H1 (cell line): ENCODE measurements at regions of chr7 and their contacts with region 1.

Region 1: GRCh38 chr7:149799397-149800171 is 26.2 kb upstream of the ZNF467 start:
- DNase-seq: peak in 1 of 2 experiments; percentile 91
- H3K4me3 ChIP-seq: no peak overlapping the region
- H3K27ac ChIP-seq: no peak overlapping the region
- H3K4me1 ChIP-seq: peaks cover 0 to 7% (median 5%) of the 10 kb centered on the region in 4 experiments; a peak in 6 of 7 replicates
- H3K27me3 ChIP-seq: no peaks in the 10 kb centered on the region
- CTCF ChIP-seq: peak in 2 of 3 experiments; percentile 73 to 89; a peak in 3 of 4 replicates
- EP300 ChIP-seq: no peak
- POLR2A ChIP-seq: no peak
- RAD21 ChIP-seq: peak; percentile 67 to 80

Region 2: GRCh38 chr7:149500910-149501309 is 298.7 kb before region 1 on chr7:
- CTCF ChIA-PET with region 1: no interaction called
- POLR2A ChIA-PET with region 1: no interaction called
- DNase-seq: no peak
- H3K4me3 ChIP-seq: no peak overlapping the region
- H3K27ac ChIP-seq: no peak overlapping the region
- H3K4me1 ChIP-seq: no peaks in the 10 kb centered on the region; a peak in 1 of 7 replicates
- H3K27me3 ChIP-seq: peaks cover 0 to 3% (median under 1%) of the 10 kb centered on the region in 4 experiments; a peak in 2 of 7 replicates
- CTCF ChIP-seq: no peak
- EP300 ChIP-seq: no peak
- POLR2A ChIP-seq: no peak
- RAD21 ChIP-seq: no peak

Region 3: GRCh38 chr7:149764481-149765398 is 34.8 kb before region 1 on chr7:
- CTCF ChIA-PET with region 1: interaction called, 28 read pairs
- POLR2A ChIA-PET with region 1: interaction called, 3 read pairs
- DNase-seq: peak in 1 of 2 experiments; percentile 73
- H3K4me3 ChIP-seq: peak overlapping the region; percentile 18 to 56 (median 38)
- H3K27ac ChIP-seq: no peak overlapping the region
- H3K4me1 ChIP-seq: peaks cover 0 to 14% (median 12%) of the 10 kb centered on the region in 4 experiments; a peak in 6 of 7 replicates
- H3K27me3 ChIP-seq: peaks cover 68 to 95% (median 87%) of the 10 kb centered on the region in 4 experiments
- CTCF ChIP-seq: peak in 2 of 3 experiments; percentile 33 to 51; a peak in 3 of 4 replicates
- EP300 ChIP-seq: no peak
- POLR2A ChIP-seq: no peak
- RAD21 ChIP-seq: peak; percentile 23 to 24; a peak in 2 of 4 replicates

Region 4: GRCh38 chr7:149771721-149772240 is 27.8 kb before region 1 on chr7:
- CTCF ChIA-PET with region 1: interaction called, 28 read pairs
- POLR2A ChIA-PET with region 1: no interaction called
- DNase-seq: peak; percentile 71 to 92
- H3K4me3 ChIP-seq: peak overlapping the region; percentile 40 to 86 (median 44); a peak in 6 of 8 replicates
- H3K27ac ChIP-seq: no peak overlapping the region; the same call in 1 of the 2 replicates
- H3K4me1 ChIP-seq: peaks cover 0 to 9% (median 7%) of the 10 kb centered on the region in 4 experiments; a peak in 6 of 7 replicates
- H3K27me3 ChIP-seq: peaks cover 42 to 72% (median 68%) of the 10 kb centered on the region in 4 experiments
- CTCF ChIP-seq: no peak
- EP300 ChIP-seq: peak in 1 of 2 experiments; percentile 51; a peak in 1 of 3 replicates
- POLR2A ChIP-seq: no peak
- RAD21 ChIP-seq: no peak

Region 5: DNA sequence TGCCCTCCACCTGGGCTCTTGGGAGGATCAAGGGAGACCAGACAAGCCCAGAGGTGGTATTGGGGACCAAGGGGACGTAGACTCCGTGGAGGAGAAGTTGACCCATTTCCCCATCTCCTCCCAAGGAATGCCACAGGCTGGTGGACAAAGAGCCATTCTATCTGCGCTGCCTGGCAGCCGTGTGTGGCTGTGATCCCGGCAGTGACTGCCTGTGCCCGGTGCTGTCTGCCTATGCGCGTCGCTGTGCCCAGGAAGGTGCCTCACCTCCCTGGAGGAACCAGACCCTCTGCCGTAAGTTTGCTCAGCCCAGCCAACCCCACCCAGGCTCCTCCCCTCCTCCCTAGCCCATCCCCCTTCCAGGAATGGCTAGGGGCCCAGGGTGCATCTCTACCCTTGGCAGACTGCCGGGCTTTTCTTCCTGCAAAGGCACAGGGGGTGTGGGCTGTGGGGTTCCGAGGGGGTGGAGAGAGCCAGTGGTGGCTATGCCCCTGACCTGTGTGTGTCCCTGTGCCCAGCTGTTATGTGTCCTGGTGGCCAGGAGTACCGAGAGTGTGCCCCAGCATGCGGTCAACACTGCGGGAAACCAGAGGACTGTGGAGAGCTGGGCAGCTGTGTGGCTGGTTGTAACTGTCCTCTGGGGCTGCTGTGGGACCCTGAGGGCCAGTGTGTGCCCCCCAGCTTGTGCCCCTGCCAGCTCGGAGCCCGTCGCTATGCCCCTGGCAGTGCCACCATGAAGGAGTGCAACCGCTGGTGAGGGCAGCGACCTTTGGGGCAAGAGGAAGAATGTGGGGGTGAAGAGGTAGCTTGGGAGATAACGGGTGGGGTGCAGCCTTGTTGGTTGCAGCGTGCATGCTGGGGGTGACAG is 16.0 kb before region 1 on chr7:
- CTCF ChIA-PET with region 1: interaction called, 120 read pairs
- POLR2A ChIA-PET with region 1: interaction called, 4 read pairs
- DNase-seq: no peak
- H3K4me3 ChIP-seq: no peak overlapping the region
- H3K27ac ChIP-seq: no peak overlapping the region
- H3K4me1 ChIP-seq: peaks cover 0 to 15% (median 6%) of the 10 kb centered on the region in 4 experiments; a peak in 6 of 7 replicates
- H3K27me3 ChIP-seq: peaks cover 0 to 15% (median 11%) of the 10 kb centered on the region in 4 experiments; a peak in 5 of 7 replicates
- CTCF ChIP-seq: no peak
- EP300 ChIP-seq: no peak
- POLR2A ChIP-seq: no peak
- RAD21 ChIP-seq: no peak

Region 6: DNA sequence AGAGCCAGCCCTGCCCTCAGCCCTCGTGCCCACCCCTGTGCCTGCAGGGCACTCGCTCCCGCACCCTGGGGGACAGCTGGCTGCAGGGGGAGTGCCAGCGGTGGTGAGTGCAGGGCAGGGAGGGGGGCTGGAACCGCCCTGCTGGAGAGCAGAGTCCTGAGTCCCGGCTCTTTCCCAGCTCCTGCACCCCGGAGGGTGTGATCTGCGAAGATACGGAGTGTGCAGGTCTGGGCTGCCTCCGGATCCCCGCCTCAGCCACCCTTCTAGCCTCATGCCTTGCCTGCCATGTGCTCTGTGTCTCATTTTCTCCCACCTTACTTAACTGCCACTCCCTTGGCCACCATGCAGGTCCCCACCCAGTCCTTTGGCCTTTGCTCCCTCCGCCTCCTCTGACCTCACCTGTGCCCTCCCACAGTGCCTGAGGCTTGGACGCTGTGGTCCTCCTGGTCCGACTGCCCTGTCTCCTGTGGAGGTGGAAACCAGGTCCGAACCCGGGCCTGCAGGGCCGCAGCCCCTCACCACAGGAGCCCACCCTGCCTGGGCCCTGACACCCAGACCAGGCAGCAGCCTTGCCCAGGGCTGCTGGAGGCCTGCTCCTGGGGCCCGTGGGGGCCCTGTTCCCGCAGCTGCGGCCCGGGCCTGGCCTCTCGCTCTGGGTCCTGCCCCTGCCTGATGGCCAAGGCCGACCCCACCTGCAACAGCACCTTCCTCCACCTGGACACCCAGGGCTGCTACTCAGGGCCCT is 22.0 kb after region 1 on chr7:
- CTCF ChIA-PET with region 1: interaction called, 67 read pairs
- POLR2A ChIA-PET with region 1: interaction called, 5 read pairs
- DNase-seq: no peak
- H3K4me3 ChIP-seq: no peak overlapping the region
- H3K27ac ChIP-seq: no peak overlapping the region
- H3K4me1 ChIP-seq: peaks cover 0 to 1% (median 0%) of the 10 kb centered on the region in 4 experiments; a peak in 2 of 7 replicates
- H3K27me3 ChIP-seq: no peaks in the 10 kb centered on the region
- CTCF ChIP-seq: no peak
- EP300 ChIP-seq: no peak
- POLR2A ChIP-seq: no peak
- RAD21 ChIP-seq: no peak

Region 7: GRCh38 chr7:149854611-149855360 is 55.2 kb after region 1 on chr7:
- CTCF ChIA-PET with region 1: interaction called, 209 read pairs
- POLR2A ChIA-PET with region 1: no interaction called
- DNase-seq: peak in 1 of 2 experiments; percentile 62
- H3K4me3 ChIP-seq: peak overlapping the region in 2 of 4 experiments; percentile 1 to 27; a peak in 1 of 8 replicates
- H3K27ac ChIP-seq: no peak overlapping the region
- H3K4me1 ChIP-seq: peaks cover 6 to 17% (median 11%) of the 10 kb centered on the region in 4 experiments
- H3K27me3 ChIP-seq: no peaks in the 10 kb centered on the region
- CTCF ChIP-seq: no peak
- EP300 ChIP-seq: no peak
- POLR2A ChIP-seq: no peak
- RAD21 ChIP-seq: no peak

Region 8: DNA sequence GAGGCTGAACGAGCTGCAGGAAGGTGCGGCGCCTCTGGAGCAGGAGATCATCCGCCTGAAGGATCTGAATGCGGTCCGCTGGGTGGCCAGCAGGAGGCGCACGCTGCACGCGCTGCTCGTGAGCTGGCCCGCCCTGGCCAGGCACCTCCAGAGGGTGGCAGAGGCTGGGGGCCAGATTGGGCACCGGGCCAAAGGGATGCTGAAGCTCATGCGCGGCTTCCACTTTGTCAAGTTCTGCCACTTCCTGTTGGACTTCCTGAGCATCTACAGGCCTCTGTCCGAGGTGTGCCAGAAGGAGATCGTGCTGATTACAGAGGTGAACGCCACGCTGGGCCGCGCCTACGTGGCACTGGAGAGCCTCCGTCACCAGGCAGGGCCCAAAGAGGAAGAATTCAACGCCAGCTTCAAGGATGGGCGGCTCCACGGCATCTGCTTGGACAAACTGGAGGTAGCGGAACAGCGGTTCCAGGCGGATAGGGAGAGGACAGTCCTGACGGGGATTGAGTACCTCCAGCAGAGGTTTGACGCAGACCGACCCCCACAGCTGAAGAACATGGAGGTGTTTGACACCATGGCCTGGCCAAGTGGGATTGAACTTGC is 62.0 kb after region 1 on chr7:
- CTCF ChIA-PET with region 1: interaction called, 209 read pairs
- POLR2A ChIA-PET with region 1: no interaction called
- DNase-seq: peak in 1 of 2 experiments; percentile 89
- H3K4me3 ChIP-seq: no peak overlapping the region
- H3K27ac ChIP-seq: no peak overlapping the region
- H3K4me1 ChIP-seq: no peaks in the 10 kb centered on the region
- H3K27me3 ChIP-seq: no peaks in the 10 kb centered on the region; a peak in 2 of 7 replicates
- CTCF ChIP-seq: peak; percentile 98 to 100 (median 99)
- EP300 ChIP-seq: no peak
- POLR2A ChIP-seq: no peak
- RAD21 ChIP-seq: peak; percentile 87 to 94